Activated CD4-positive, alpha-beta memory T cell treated with anti-CD3 and anti-CD28 coated beads, Interleukin-2, amount 10 ng/mL, durations not matched to agents 7 days and 5 days (primary cell): ENCODE measurements at regions of chr3 and their contacts with region 1.

Region 1: DNA sequence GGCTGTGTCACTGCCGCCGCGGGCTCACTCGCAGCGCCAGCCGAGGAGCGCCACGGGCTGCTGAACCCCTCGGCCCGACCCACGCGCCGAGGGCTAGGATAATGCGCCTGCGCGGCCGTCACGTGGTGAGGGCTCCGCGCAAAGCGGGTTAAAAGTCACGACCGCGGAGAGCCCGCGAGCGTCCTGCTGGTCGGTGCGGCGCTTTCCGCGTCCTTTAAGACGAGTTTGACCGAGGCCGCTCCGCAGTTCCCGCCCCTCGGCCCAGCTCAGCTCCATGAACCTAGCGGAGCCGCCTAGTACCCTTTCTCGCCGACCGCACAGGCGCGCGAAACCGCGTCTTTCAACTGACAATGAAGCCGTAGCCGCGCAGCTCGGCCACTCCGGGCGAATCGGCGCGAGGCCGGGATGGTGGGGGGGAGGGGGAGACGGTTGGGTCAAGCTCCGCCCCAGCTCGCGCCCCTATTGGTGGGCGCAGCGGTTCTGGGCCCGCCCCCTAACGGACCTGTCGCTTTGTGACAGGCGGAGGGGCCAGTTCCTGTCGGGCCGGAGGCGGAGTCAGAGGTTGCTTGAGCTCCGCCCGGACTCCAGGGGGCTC is 636 bp upstream of the STT3B start:
- DNase-seq: peak; percentile 99
- H3K4me3 Mint-ChIP-seq: no peak overlapping the region
- H3K27ac Mint-ChIP-seq: peak overlapping the region; percentile 96
- H3K4me1 Mint-ChIP-seq: peaks cover 11% of the 10 kb centered on the region
- H3K27me3 Mint-ChIP-seq: no peaks in the 10 kb centered on the region

Region 2: DNA sequence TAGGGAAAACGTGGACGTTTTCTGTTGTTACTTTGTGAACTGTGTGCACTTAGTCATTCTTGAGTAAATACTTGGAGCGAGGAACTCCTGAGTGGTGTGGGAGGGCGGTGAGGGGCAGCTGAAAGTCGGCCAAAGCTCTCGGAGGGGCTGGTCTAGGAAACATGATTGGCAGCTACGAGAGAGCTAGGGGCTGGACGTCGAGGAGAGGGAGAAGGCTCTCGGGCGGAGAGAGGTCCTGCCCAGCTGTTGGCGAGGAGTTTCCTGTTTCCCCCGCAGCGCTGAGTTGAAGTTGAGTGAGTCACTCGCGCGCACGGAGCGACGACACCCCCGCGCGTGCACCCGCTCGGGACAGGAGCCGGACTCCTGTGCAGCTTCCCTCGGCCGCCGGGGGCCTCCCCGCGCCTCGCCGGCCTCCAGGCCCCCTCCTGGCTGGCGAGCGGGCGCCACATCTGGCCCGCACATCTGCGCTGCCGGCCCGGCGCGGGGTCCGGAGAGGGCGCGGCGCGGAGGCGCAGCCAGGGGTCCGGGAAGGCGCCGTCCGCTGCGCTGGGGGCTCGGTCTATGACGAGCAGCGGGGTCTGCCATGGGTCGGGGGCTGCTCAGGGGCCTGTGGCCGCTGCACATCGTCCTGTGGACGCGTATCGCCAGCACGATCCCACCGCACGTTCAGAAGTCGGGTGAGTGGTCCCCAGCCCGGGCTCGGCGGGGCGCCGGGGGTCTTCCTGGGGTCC is 925.6 kb before region 1 on chr3 and contains the start of gene TGFBR2:
- CTCF ChIA-PET with region 1: no interaction called
- POLR2A ChIA-PET with region 1: interaction called, 37 read pairs
- DNase-seq: peak; percentile 88
- H3K4me3 Mint-ChIP-seq: peak within 1 kb of the TSS; percentile 93
- H3K27ac Mint-ChIP-seq: peak within 1 kb of the TSS; percentile 92
- H3K4me1 Mint-ChIP-seq: peaks cover 57% of the 10 kb centered on the region
- H3K27me3 Mint-ChIP-seq: no peaks in the 10 kb centered on the region
- total RNA-seq, gene TGFBR2: 60.1 to 60.8 TPM

Region 3: DNA sequence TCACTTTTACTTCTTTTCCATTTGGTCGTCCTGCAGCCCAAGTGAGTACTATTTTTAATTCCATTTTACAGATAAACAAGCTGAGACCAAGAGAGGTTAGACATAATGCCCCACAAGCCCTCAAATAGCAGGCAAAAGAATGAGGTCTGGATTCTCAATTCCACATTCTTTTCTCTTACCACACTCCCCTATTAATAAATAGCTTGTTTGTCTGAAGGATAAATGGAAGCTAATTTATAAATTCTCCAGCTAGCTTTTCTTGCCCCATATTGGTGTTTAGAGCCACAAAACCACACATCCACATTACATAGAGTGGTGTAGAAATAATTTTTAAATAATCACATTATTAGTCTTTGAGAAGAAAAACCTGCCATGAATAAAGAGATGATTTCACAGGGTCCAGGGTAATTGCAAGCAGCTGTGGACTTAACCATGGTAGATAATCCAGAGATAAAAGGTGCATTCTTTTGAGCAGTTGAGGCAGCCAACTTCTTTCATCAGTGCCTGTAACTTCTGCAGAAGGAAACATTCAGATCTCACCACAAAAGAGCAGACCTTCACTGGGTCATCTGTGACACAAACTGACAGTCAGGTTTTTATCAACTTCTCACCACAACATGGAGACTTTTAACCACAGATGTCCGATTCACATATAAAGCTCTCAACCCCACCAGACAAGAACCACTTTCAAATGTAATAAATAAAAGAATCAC is 312.8 kb before region 1 on chr3:
- CTCF ChIA-PET with region 1: interaction called, 9 read pairs
- POLR2A ChIA-PET with region 1: interaction called, 97 read pairs
- DNase-seq: no peak
- H3K4me3 Mint-ChIP-seq: no peak overlapping the region
- H3K27ac Mint-ChIP-seq: peak overlapping the region; percentile 69
- H3K4me1 Mint-ChIP-seq: peaks cover 92% of the 10 kb centered on the region
- H3K27me3 Mint-ChIP-seq: no peaks in the 10 kb centered on the region

Region 4: GRCh38 chr3:31250116-31250777 is 281.8 kb before region 1 on chr3:
- CTCF ChIA-PET with region 1: no interaction called
- POLR2A ChIA-PET with region 1: interaction called, 10 read pairs
- DNase-seq: no peak
- H3K4me3 Mint-ChIP-seq: no peak overlapping the region
- H3K27ac Mint-ChIP-seq: peak overlapping the region; percentile 23
- H3K4me1 Mint-ChIP-seq: peaks cover 69% of the 10 kb centered on the region
- H3K27me3 Mint-ChIP-seq: no peaks in the 10 kb centered on the region

Region 5: GRCh38 chr3:31503456-31503855 is 28.6 kb before region 1 on chr3:
- CTCF ChIA-PET with region 1: interaction called, 4 read pairs
- POLR2A ChIA-PET with region 1: interaction called, 43 read pairs
- DNase-seq: no peak
- H3K4me3 Mint-ChIP-seq: no peak overlapping the region
- H3K27ac Mint-ChIP-seq: no peak overlapping the region
- H3K4me1 Mint-ChIP-seq: peaks cover 39% of the 10 kb centered on the region
- H3K27me3 Mint-ChIP-seq: no peaks in the 10 kb centered on the region

Region 6: DNA sequence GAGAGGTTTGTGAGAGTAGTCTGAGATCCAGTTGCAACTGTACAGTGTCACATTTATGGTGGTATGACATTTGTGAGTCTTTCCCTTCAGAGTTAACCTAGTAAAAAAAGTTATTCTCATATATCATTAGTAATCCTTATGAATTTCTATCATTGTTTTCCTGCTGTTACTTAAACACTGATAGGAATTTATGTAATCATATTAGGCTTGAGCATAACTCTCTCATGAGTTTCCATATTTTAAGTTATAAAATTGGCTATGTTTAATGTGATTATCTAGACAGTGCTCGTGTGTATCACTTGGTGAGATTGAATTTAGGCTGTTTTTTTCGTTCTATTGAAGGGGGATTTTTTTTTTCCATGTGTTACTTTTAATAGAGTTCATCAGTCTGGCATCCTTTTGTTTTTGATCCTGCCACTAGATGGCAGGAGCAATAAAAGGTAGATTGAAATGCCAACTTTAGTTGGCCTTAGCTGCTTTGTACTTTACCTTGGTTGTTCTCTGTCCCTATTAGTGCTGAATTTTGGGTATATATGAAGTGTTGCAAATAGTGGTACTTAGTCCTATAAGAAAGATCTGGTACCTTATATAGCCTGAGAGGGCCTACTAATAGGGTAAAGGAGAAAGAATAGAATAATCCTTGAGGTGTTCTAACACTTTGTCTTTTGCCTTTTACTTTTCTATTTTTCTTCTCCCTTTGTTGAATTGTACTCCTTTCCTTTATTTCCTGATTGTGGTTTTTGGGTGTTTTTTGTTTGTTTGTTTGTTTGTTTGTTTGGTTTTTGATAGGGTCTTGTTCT is 18.6 kb after region 1 on chr3:
- CTCF ChIA-PET with region 1: interaction called, 10 read pairs
- POLR2A ChIA-PET with region 1: interaction called, 56 read pairs
- DNase-seq: no peak
- H3K4me3 Mint-ChIP-seq: no peak overlapping the region
- H3K27ac Mint-ChIP-seq: peak overlapping the region; percentile 6
- H3K4me1 Mint-ChIP-seq: peaks cover 61% of the 10 kb centered on the region
- H3K27me3 Mint-ChIP-seq: no peaks in the 10 kb centered on the region

Region 7: DNA sequence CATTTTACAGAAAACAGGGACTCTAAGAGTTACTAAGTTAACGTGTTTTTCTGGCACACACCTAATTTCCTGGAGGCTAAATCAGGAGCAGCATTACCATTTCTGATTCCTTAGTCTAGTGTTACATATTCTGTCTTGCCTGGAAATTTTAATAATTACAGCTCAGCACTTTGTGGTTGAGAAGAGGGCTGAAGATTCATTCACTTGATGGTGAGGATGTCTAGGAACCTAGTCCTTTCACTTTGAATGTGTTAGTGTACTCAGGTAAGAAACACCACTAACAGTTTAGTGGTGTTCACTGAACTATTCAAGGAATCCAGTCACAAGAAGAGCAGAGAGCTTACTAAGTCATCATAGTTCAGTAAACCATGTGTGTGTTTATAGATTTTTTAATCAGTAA is 103.5 kb after region 1 on chr3:
- CTCF ChIA-PET with region 1: interaction called, 4 read pairs
- POLR2A ChIA-PET with region 1: interaction called, 10 read pairs
- DNase-seq: no peak
- H3K4me3 Mint-ChIP-seq: no peak overlapping the region
- H3K27ac Mint-ChIP-seq: peak overlapping the region; percentile 53
- H3K4me1 Mint-ChIP-seq: peaks cover 35% of the 10 kb centered on the region
- H3K27me3 Mint-ChIP-seq: no peaks in the 10 kb centered on the region

Region 8: DNA sequence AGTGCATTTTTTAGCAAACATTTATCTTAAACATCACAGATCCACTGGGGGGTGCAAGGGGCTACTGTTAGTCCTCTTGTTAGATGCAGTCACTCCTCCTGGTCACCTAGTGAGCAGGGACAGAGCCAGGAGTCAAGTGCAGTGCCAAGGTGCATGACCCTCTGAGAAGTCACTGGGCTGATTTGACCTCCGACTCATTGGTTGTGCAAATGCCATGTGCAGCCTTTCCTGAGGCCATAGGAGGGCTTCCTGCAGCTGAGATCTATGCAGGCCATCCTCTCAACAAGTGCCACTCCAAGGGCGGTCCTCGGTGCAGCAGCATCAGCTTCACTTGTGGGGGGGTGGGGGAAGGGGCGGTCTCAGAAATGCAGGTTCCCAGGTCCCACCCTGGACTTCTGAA is 634.6 kb after region 1 on chr3:
- CTCF ChIA-PET with region 1: no interaction called
- POLR2A ChIA-PET with region 1: no interaction called
- DNase-seq: no peak
- H3K4me3 Mint-ChIP-seq: no peak overlapping the region
- H3K27ac Mint-ChIP-seq: peak overlapping the region; percentile 14
- H3K4me1 Mint-ChIP-seq: no peaks in the 10 kb centered on the region
- H3K27me3 Mint-ChIP-seq: no peaks in the 10 kb centered on the region